Aorta (tissue), 5 donors: ENCODE measurements at regions of chr9 and their contacts with region 1.

Region 1: GRCh38 chr9:34603610-34604231 is 8.2 kb downstream of the RPP25L start:
- DNase-seq: peak; percentile 85 to 94
- ATAC-seq: peak; percentile 89
- H3K4me3 ChIP-seq: no peak overlapping the region
- H3K27ac ChIP-seq: no peak overlapping the region
- H3K4me1 ChIP-seq: no peaks in the 10 kb centered on the region
- H3K27me3 ChIP-seq: no peaks in the 10 kb centered on the region

Region 2: DNA sequence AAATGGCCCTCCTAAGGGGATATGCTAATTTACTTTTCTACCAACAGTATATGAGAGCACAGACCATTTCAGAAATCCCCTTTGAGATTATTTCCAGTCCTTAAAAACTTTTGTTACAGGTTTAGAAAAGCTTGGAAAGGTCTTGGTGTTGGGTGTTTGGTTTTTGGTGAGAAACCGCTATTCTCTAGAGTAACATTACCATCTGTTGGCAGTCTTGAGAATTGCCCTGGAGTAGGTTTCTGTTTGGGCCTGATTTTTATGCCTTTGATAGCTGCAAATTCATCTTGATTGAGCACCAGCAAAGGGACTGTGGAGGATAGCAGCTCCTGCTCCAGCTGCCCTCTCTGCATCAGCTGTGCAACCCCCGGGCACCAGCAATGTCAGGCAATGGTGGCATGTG is 266.3 kb before region 1 on chr9:
- intact Hi-C with region 1: loop called (anchors 5 to 10 kb)
- DNase-seq: no peak
- ATAC-seq: no peak
- H3K4me3 ChIP-seq: no peak overlapping the region
- H3K27ac ChIP-seq: no peak overlapping the region
- H3K4me1 ChIP-seq: no peaks in the 10 kb centered on the region
- H3K27me3 ChIP-seq: no peaks in the 10 kb centered on the region

Region 3: GRCh38 chr9:34437006-34437925 is 166.5 kb before region 1 on chr9:
- intact Hi-C with region 1: loop called in 1 of 2 experiments (anchors 10 kb)
- DNase-seq: no peak
- ATAC-seq: no peak
- H3K4me3 ChIP-seq: no peak overlapping the region
- H3K27ac ChIP-seq: no peak overlapping the region
- H3K4me1 ChIP-seq: no peaks in the 10 kb centered on the region
- H3K27me3 ChIP-seq: no peaks in the 10 kb centered on the region

Region 4: GRCh38 chr9:34458013-34458958 is 145.4 kb before region 1 on chr9 and contains the starts of genes DNAI1 and FAM219A:
- intact Hi-C with region 1: loop called in 1 of 2 experiments (anchors 5 kb)
- DNase-seq: peak; percentile 99
- ATAC-seq: peak; percentile 98
- H3K4me3 ChIP-seq: peak within 1 kb of the TSS; percentile 88
- H3K27ac ChIP-seq: peak within 1 kb of the TSS in 1 of 2 donors; percentile 32
- H3K4me1 ChIP-seq: no peaks in the 10 kb centered on the region
- H3K27me3 ChIP-seq: no peaks in the 10 kb centered on the region
- total RNA-seq, gene DNAI1: not detected
- total RNA-seq, gene FAM219A: 43.9 to 48.0 TPM

Region 5: GRCh38 chr9:34500623-34501267 is 103.0 kb before region 1 on chr9:
- intact Hi-C with region 1: loop called in 1 of 2 experiments (anchors 5 kb)
- DNase-seq: peak; percentile 49 to 84
- ATAC-seq: peak; percentile 73
- H3K4me3 ChIP-seq: no peak overlapping the region
- H3K27ac ChIP-seq: no peak overlapping the region
- H3K4me1 ChIP-seq: no peaks in the 10 kb centered on the region
- H3K27me3 ChIP-seq: no peaks in the 10 kb centered on the region

Region 6: DNA sequence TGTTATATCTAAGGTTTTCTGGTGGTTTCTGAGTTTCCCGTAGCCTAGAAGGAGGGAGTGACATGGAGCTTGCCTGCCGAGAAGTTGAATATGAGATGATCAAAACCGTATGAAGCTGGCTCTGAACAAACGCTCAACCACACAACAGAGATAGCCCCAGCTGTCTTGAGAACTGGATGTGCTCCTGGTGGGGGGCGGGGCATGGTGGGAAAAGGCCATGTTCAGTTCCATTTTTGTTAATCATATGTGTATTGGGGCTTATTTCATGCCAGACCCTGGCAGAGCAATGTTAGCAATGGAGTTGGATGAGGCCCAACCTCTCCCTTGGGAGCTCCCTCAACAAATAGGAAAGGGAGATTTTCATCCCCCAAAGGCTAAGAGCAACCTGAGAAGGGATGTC is 82.5 kb after region 1 on chr9:
- intact Hi-C with region 1: no loop called
- DNase-seq: peak; percentile 54 to 82
- ATAC-seq: no peak
- H3K4me3 ChIP-seq: no peak overlapping the region
- H3K27ac ChIP-seq: no peak overlapping the region
- H3K4me1 ChIP-seq: no peaks in the 10 kb centered on the region
- H3K27me3 ChIP-seq: no peaks in the 10 kb centered on the region

Region 7: GRCh38 chr9:34899535-34900158 is 295.9 kb after region 1 on chr9:
- intact Hi-C with region 1: no loop called
- DNase-seq: peak; percentile 78 to 89
- ATAC-seq: peak; percentile 93
- H3K4me3 ChIP-seq: no peak overlapping the region
- H3K27ac ChIP-seq: no peak overlapping the region
- H3K4me1 ChIP-seq: no peaks in the 10 kb centered on the region
- H3K27me3 ChIP-seq: peaks cover 0 to 2% of the 10 kb centered on the region in 2 donors